ENCODE measurements at regions of chr3 and their contacts with region 1.

Region 1: GRCh38 chr3:196518966-196519717 is 4.0 kb upstream of the SMCO1 start:
- DNase-seq: peak in 4 of 5 donors; percentile 59 to 70 (median 66)
- ATAC-seq: peak; percentile 66 to 82 (median 78)
- H3K4me3 ChIP-seq: no peak overlapping the region
- H3K27ac ChIP-seq: peak overlapping the region in 1 of 12 donors; percentile 1
- H3K4me1 ChIP-seq: peaks cover 0 to 10% (median 1%) of the 10 kb centered on the region in 12 donors
- H3K27me3 ChIP-seq: no peaks in the 10 kb centered on the region
- CTCF ChIP-seq: peak; percentile 45 to 72 (median 61)
- POLR2A ChIP-seq: no peak

Region 2: GRCh38 chr3:196063456-196063855 is 455.7 kb before region 1 on chr3:
- intact Hi-C with region 1: loop called in 2 of 10 experiments (anchors 10 kb)
- DNase-seq: no peak
- ATAC-seq: no peak
- H3K4me3 ChIP-seq: no peak overlapping the region
- H3K27ac ChIP-seq: no peak overlapping the region
- H3K4me1 ChIP-seq: no peaks in the 10 kb centered on the region
- H3K27me3 ChIP-seq: no peaks in the 10 kb centered on the region
- CTCF ChIP-seq: no peak
- POLR2A ChIP-seq: no peak

Region 3: GRCh38 chr3:196073188-196073838 is 445.8 kb before region 1 on chr3:
- intact Hi-C with region 1: loop called in 5 of 10 experiments (anchors 5 to 10 kb)
- DNase-seq: peak in 3 of 5 donors; percentile 47 to 60 (median 49)
- ATAC-seq: peak; percentile 80 to 94 (median 90)
- H3K4me3 ChIP-seq: no peak overlapping the region
- H3K27ac ChIP-seq: no peak overlapping the region
- H3K4me1 ChIP-seq: peaks cover 0 to 23% (median 0%) of the 10 kb centered on the region in 12 donors
- H3K27me3 ChIP-seq: no peaks in the 10 kb centered on the region
- CTCF ChIP-seq: peak; percentile 48 to 77 (median 75)
- POLR2A ChIP-seq: no peak

Region 4: DNA sequence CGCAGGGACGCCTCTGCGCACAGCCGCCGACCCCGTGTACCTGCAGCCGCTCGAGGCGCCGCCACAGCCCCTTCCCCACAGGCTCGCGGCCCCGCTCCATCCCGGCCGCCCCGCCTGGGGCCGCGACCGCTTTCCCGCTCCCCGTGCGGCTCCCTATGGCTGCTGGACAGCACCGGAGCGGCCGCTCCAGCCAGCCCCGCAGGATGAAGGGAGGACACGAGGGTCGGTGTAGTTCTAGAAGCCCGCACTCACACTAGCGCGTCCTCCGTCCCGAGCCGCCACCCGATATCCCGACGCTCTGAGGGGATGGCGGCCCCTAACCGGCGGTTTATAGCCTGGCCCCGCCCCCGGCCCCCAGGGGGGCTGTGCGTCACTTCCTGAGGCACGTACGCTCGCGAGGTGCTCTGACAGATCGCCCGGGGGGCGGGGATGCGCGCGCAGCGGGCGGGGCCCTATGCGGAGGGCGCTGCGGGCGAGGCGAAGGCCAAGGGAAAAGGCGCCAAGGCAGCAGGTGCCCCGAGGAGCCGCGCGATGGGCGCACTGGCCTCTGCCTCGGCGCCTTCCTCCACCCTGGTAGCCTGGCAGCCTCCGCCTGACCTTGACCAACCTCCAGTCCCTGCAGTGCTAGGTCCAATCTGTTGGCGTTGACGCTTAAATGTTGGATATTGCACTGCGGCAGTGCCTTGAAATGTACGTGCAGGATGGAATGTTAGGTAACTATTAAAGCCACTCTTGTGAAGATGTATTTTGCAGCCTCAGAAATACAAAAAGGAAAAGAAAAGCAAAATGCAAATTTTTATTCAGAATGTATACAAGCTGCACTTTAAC is 437.1 kb before region 1 on chr3 and contains the start of gene TFRC:
- intact Hi-C with region 1: loop called in 1 of 10 experiments (anchors 5 kb)
- DNase-seq: peak; percentile 94 to 98 (median 96)
- ATAC-seq: peak; percentile 97 to 99 (median 99)
- H3K4me3 ChIP-seq: peak within 1 kb of the TSS; percentile 78 to 98 (median 87)
- H3K27ac ChIP-seq: peak within 1 kb of the TSS; percentile 45 to 98 (median 94)
- H3K4me1 ChIP-seq: peaks cover 2 to 37% (median 21%) of the 10 kb centered on the region in 12 donors
- H3K27me3 ChIP-seq: no peaks in the 10 kb centered on the region
- CTCF ChIP-seq: peak in 1 of 12 donors; percentile 18
- POLR2A ChIP-seq: peak; percentile 92 to 99
- total RNA-seq, gene TFRC: 15.7 to 232 (median 121) TPM

Region 5: DNA sequence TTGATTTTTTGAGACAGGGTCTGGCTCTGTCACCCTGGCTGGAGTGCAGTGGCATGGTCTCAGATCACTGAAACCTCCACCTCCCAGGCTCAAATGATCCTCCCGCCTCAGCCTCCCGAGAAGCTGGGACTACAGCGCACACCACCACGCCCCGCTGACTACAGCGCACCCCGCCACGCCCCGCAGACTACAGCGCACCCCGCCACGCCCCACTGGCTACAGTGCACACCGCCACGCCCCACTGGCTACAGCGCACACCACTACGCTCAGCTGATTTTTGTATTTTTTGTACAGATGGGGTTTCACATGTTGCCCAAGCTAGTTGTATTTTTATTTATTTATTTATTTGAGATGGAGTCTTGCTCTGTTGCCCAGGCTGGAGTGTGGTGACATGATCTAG is 267.2 kb before region 1 on chr3:
- intact Hi-C with region 1: loop called (anchors 1 to 5 kb)
- DNase-seq: no peak
- ATAC-seq: peak in 1 of 4 donors; percentile 53
- H3K4me3 ChIP-seq: no peak overlapping the region
- H3K27ac ChIP-seq: no peak overlapping the region
- H3K4me1 ChIP-seq: no peaks in the 10 kb centered on the region
- H3K27me3 ChIP-seq: no peaks in the 10 kb centered on the region
- CTCF ChIP-seq: no peak
- POLR2A ChIP-seq: no peak

Region 6: DNA sequence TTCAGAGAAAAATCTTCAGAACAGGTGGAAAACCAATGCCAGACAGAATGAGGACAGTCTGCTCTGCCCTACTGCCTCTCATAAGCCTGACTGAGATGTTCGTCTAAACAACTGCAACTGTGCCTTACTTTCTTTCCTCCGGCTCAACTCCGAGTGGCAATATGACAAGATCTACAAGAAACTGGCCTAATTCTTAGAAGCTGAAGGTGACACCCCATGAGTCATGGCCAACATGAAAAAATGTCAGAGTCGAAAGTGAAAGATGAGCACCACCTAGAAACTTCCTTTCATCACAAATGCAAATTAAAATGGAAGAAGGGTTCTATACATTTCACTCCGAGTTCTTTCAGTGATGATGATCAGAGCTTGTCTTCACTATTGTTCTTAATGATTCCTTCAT is 244.6 kb before region 1 on chr3:
- intact Hi-C with region 1: loop called in 1 of 10 experiments (anchors 5 kb)
- DNase-seq: no peak
- ATAC-seq: no peak
- H3K4me3 ChIP-seq: no peak overlapping the region
- H3K27ac ChIP-seq: peak overlapping the region in 1 of 12 donors; percentile 79
- H3K4me1 ChIP-seq: peaks cover 0 to 45% (median 22%) of the 10 kb centered on the region in 12 donors
- H3K27me3 ChIP-seq: no peaks in the 10 kb centered on the region
- CTCF ChIP-seq: no peak
- POLR2A ChIP-seq: no peak

Region 7: DNA sequence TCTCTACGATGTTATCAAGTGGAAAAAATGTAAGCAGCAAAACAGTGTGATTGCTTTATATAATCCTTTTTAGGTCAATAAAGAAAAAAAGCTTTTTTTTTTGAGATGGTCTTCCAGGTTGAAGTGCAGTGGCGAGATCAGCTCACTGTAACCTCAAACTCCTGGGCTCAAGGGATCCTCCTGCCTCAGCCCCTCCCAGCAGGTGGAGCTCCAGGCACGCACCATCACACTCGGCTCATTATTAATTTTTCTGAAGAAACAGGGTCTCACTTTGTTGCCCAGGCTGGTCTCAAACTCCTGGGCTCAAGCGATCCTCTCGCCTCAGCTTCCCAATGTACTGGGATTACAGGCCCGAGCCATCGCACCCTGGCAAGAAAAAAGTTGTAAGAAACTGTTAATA is 32.9 kb before region 1 on chr3:
- intact Hi-C with region 1: loop called in 2 of 10 experiments (anchors 2 to 5 kb)
- DNase-seq: no peak
- ATAC-seq: no peak
- H3K4me3 ChIP-seq: no peak overlapping the region
- H3K27ac ChIP-seq: no peak overlapping the region
- H3K4me1 ChIP-seq: peaks cover 0 to 8% (median 0%) of the 10 kb centered on the region in 12 donors
- H3K27me3 ChIP-seq: no peaks in the 10 kb centered on the region
- CTCF ChIP-seq: peak; percentile 13 to 52 (median 40)
- POLR2A ChIP-seq: no peak

Region 8: GRCh38 chr3:196639483-196640296 is 120.5 kb after region 1 on chr3 and contains the start of gene NRROS:
- intact Hi-C with region 1: no loop called
- DNase-seq: peak; percentile 72 to 85 (median 77)
- ATAC-seq: peak in 3 of 4 donors; percentile 85 to 89 (median 87)
- H3K4me3 ChIP-seq: peak within 1 kb of the TSS; percentile 30 to 89 (median 62)
- H3K27ac ChIP-seq: peak within 1 kb of the TSS; percentile 21 to 96 (median 75)
- H3K4me1 ChIP-seq: peaks cover 0 to 73% (median 8%) of the 10 kb centered on the region in 12 donors
- H3K27me3 ChIP-seq: peaks cover 0 to 29% (median 0%) of the 10 kb centered on the region in 9 donors
- CTCF ChIP-seq: peak in 1 of 12 donors; percentile 7
- POLR2A ChIP-seq: peak in 1 of 2 donors; percentile 41
- total RNA-seq, gene NRROS: 2.1 to 23.8 (median 3.4) TPM

Measured in heart left ventricle (tissue), 16 donors.